GM10248 (cell line): ENCODE measurements at regions of chr6 and their contacts with region 1.

Region 1: GRCh38 chr6:159104163-159104925 is 59.6 kb upstream of the TAGAP start:
- DNase-seq: peak; percentile 85
- CTCF ChIP-seq: peak; percentile 88

Region 2: DNA sequence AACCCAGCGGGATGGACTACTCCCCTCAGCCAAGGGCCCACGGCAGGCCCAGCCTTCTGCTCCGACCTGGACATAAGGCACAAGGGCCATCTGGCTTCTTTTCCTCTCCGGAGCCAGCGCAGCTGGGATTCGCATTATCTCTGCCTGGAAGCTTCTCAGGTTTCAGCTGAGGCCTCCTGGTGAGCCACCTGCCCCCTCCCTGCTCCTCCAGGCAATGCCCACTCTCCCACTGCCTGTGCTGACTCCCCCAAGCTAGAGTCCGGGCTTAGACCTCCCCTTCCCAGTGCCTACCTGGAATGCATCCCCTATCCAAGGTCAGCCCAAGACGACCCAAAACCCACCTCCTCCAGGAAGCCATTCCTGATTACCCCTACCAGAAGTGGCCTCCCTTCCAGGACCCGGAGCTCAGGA is 345.9 kb before region 1 on chr6:
- CTCF ChIA-PET with region 1: no interaction called
- POLR2A ChIA-PET with region 1: no interaction called
- DNase-seq: no peak
- CTCF ChIP-seq: no peak

Region 3: GRCh38 chr6:159008656-159009288 is 95.6 kb before region 1 on chr6:
- CTCF ChIA-PET with region 1: interaction called, 208 read pairs
- POLR2A ChIA-PET with region 1: no interaction called
- DNase-seq: peak; percentile 61
- CTCF ChIP-seq: peak; percentile 59

Region 4: GRCh38 chr6:159042003-159042825 is 62.1 kb before region 1 on chr6:
- CTCF ChIA-PET with region 1: interaction called, 198 read pairs
- POLR2A ChIA-PET with region 1: interaction called, 4 read pairs
- DNase-seq: peak; percentile 62
- CTCF ChIP-seq: peak; percentile 98

Region 5: DNA sequence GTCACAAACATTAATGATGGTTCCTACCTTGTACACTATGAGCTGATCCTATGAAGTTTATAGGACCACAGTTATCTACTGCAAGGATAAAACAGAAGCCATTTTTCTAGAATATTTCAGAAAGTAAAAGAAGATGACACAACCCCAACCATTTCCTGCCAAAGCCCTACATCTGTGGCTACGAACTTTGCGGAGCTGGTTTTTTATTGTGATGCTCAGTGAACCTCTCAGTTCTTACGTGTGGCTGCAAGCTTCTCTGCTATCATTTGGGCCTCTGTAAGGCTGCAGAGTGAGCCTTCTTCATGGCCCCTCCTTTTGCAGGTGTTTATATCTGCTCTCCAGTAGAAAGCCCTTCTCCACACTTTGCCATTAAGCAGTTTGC is 41.8 kb before region 1 on chr6:
- CTCF ChIA-PET with region 1: interaction called, 28 read pairs
- POLR2A ChIA-PET with region 1: no interaction called
- DNase-seq: peak; percentile 30
- CTCF ChIP-seq: no peak

Region 6: GRCh38 chr6:159116343-159116742 is 12.0 kb after region 1 on chr6:
- CTCF ChIA-PET with region 1: interaction called, 41 read pairs
- POLR2A ChIA-PET with region 1: no interaction called
- DNase-seq: peak; percentile 50
- CTCF ChIP-seq: no peak

Region 7: DNA sequence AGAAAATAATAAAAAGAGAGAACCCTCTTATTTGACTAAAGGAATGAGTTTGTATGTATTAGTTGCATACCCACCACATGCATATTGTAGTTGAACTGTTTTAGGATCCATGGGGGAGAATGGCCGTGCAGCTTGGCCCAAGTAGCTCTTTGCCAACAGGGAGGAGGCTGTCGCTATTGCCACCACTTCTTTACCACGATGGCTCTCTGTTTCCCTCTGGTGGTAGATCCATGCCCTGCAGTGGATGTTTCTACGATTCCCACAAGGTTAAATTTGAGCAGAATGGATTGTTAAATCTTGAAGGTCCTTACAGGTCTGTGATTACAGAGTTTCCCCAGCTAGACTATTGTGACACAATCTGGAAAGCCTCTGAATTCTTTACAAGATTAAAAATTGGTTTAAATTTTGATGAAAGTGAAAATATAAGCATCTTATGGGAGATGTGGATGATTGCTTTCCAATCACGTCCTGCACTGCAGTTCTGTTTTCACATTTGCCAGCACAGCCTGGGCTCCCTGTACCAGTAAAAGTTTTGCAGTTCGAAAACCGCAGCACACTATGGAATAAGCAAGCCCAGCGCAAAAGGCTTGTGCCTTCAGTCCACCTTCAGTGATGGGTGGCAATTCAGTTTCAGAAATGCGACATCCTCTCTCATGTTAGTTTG is 30.5 kb after region 1 on chr6:
- CTCF ChIA-PET with region 1: interaction called, 112 read pairs
- POLR2A ChIA-PET with region 1: no interaction called
- DNase-seq: peak; percentile 78
- CTCF ChIP-seq: peak; percentile 98